ENCODE measurements at regions of chr21 and their contacts with region 1.

Region 1: DNA sequence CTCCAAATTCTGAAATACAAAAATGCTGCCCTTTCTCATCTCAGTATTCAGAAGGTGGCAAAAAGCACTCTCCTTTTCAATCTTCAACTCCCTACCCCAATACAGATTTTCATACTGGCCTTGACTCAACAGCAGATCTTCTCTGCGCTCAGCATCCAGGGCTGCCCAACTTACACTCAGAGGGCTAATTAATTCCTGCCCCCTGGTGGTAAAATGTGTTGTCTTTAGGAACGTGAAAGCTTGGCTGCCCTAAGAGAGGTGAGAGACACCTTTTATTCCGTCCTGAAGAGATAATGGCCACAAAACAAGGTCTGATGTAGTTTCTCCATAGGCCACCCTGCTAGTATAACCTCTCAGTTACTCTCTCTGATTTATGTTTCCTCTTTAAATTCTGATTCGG is 25.0 kb downstream of the KRTAP24-1 start:
- DNase-seq: peak in 1 of 2 experiments; percentile 48
- H3K4me3 ChIP-seq: no peak overlapping the region
- H3K27ac ChIP-seq: no peak overlapping the region
- H3K4me1 ChIP-seq: no peaks in the 10 kb centered on the region
- H3K27me3 ChIP-seq: no peaks in the 10 kb centered on the region
- CTCF ChIP-seq: peak; percentile 14 to 65 (median 58)
- EP300 ChIP-seq: no peak
- POLR2A ChIP-seq: no peak
- RAD21 ChIP-seq: peak; percentile 64 to 67

Region 2: DNA sequence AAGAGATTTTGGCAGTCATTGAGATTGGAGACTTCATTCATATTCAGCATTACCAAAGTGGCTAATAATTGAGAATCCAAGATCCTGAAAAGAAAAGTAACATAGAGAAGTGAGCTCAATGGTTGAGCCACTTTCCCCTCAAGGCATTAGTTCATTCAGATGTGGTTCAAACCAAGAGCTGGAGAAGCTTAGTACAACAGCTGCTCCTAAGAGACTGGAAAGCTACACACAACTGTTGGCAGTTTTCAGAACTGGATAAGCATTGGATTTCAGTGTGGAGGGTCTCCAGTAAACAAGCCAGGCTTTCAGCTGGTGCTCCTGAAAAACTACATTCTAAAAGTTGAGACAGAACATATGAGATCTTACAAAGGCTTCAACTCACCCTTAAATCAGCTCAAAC is 12.7 kb before region 1 on chr21:
- CTCF ChIA-PET with region 1: interaction called, 16 read pairs
- POLR2A ChIA-PET with region 1: no interaction called
- DNase-seq: no peak
- H3K4me3 ChIP-seq: no peak overlapping the region
- H3K27ac ChIP-seq: no peak overlapping the region
- H3K4me1 ChIP-seq: no peaks in the 10 kb centered on the region
- H3K27me3 ChIP-seq: no peaks in the 10 kb centered on the region
- CTCF ChIP-seq: no peak
- EP300 ChIP-seq: no peak
- POLR2A ChIP-seq: no peak
- RAD21 ChIP-seq: no peak

Region 3: DNA sequence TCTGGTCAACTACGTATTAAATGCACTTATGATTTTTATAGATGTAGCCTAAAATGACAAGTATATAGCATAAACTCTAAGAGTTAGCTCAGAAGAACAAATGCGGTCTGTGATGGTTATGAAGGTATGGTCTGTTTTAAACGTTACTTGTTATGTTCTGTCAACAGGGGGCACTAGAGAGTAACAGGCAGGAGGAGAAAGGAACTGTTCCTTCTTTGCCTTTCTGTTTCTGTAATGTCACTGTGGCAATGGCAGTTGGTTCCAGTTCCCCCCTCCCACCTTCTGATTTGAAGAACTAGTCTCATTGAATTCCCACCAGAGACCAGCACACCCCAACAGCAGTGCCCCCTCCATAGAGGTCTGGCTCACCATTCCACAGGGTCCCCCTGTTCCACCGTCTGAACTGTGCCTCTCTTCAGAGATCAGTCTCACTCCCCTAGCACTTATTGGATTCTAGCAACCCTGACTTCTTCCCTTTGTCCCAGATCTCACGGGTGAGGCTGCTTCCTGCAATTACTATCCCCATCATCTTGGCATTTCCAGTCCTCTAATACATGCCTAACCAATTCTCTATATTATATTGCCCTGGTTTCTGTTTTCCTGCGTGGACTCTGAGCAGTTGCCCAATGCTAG is 11.0 kb after region 1 on chr21:
- CTCF ChIA-PET with region 1: interaction called, 11 read pairs
- POLR2A ChIA-PET with region 1: no interaction called
- DNase-seq: peak in 1 of 2 experiments; percentile 48
- H3K4me3 ChIP-seq: no peak overlapping the region
- H3K27ac ChIP-seq: no peak overlapping the region
- H3K4me1 ChIP-seq: no peaks in the 10 kb centered on the region
- H3K27me3 ChIP-seq: no peaks in the 10 kb centered on the region
- CTCF ChIP-seq: peak in 2 of 3 experiments; percentile 57 to 86; a peak in 3 of 4 replicates
- EP300 ChIP-seq: no peak
- POLR2A ChIP-seq: no peak
- RAD21 ChIP-seq: peak; percentile 67 to 68